ENCODE measurements at regions of chr19 and their contacts with region 1.

Region 1: GRCh38 chr19:36114763-36115452 is at the start of gene POLR2I:
- DNase-seq: peak; percentile 97 to 100 (median 99)
- ATAC-seq: peak; percentile 88 to 89
- H3K4me3 Mint-ChIP-seq: peak within 1 kb of the TSS; percentile 83 to 99 (median 94)
- H3K27ac Mint-ChIP-seq: peak within 1 kb of the TSS; percentile 93 to 99 (median 98)
- H3K4me1 Mint-ChIP-seq: peaks cover 20 to 59% (median 51%) of the 10 kb centered on the region in 4 donors
- H3K27me3 Mint-ChIP-seq: peaks cover 0 to 4% (median 0%) of the 10 kb centered on the region in 5 donors
- polyA plus RNA-seq, gene POLR2I: 124 to 168 (median 149) TPM

Region 2: GRCh38 chr19:36054119-36054732 is 60.7 kb before region 1 on chr19 and contains the start of gene THAP8:
- POLR2A ChIA-PET with region 1: interaction called, 22 read pairs
- DNase-seq: peak; percentile 97 to 100 (median 100)
- ATAC-seq: peak; percentile 83 to 85
- H3K4me3 Mint-ChIP-seq: peak within 1 kb of the TSS; percentile 95 to 100 (median 98)
- H3K27ac Mint-ChIP-seq: peak within 1 kb of the TSS; percentile 92 to 99 (median 98)
- H3K4me1 Mint-ChIP-seq: peaks cover 13 to 33% (median 28%) of the 10 kb centered on the region in 4 donors
- H3K27me3 Mint-ChIP-seq: no peaks in the 10 kb centered on the region
- polyA plus RNA-seq, gene THAP8: 2.4 to 7.2 (median 5.3) TPM

Region 3: DNA sequence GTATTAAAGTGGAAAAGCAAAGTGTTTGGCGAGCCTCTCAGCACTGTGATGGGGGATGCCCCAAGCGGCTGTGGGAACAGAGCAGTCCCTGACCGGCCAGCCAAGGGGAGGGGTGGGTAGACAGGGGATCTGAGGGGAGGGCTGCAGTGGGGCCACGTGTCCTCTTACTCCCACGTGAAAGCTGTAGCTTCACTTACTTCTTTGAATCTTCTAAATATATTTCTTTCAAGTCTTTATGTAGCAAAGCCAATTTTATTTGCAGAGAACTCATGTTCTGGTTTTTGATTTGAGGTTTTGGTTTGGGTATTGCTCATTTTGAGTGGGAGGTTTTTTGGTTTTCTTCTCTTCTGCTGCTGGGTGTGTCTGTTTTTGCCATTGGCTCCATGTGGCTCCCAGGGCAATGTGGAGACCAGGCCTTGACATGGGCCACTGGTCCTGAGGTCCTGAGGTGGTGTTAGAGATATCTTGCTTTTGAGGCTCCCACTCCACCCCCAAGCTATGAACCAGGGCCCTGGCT is 21.7 kb before region 1 on chr19:
- POLR2A ChIA-PET with region 1: no interaction called
- DNase-seq: no peak
- ATAC-seq: no peak
- H3K4me3 Mint-ChIP-seq: peak overlapping the region in 3 of 10 donors; percentile 8 to 49 (median 42)
- H3K27ac Mint-ChIP-seq: peak overlapping the region in 8 of 10 donors; percentile 34 to 87 (median 80)
- H3K4me1 Mint-ChIP-seq: peaks cover 3 to 19% (median 15%) of the 10 kb centered on the region in 4 donors
- H3K27me3 Mint-ChIP-seq: no peaks in the 10 kb centered on the region

Region 4: GRCh38 chr19:36128392-36128736 is 13.5 kb after region 1 on chr19:
- POLR2A ChIA-PET with region 1: interaction called, 42 read pairs
- DNase-seq: no peak
- ATAC-seq: peak in 1 of 2 donors; percentile 18
- H3K4me3 Mint-ChIP-seq: peak overlapping the region; percentile 83 to 93 (median 90)
- H3K27ac Mint-ChIP-seq: peak overlapping the region; percentile 60 to 95 (median 91)
- H3K4me1 Mint-ChIP-seq: peaks cover 2 to 41% (median 16%) of the 10 kb centered on the region in 4 donors
- H3K27me3 Mint-ChIP-seq: no peaks in the 10 kb centered on the region

Region 5: DNA sequence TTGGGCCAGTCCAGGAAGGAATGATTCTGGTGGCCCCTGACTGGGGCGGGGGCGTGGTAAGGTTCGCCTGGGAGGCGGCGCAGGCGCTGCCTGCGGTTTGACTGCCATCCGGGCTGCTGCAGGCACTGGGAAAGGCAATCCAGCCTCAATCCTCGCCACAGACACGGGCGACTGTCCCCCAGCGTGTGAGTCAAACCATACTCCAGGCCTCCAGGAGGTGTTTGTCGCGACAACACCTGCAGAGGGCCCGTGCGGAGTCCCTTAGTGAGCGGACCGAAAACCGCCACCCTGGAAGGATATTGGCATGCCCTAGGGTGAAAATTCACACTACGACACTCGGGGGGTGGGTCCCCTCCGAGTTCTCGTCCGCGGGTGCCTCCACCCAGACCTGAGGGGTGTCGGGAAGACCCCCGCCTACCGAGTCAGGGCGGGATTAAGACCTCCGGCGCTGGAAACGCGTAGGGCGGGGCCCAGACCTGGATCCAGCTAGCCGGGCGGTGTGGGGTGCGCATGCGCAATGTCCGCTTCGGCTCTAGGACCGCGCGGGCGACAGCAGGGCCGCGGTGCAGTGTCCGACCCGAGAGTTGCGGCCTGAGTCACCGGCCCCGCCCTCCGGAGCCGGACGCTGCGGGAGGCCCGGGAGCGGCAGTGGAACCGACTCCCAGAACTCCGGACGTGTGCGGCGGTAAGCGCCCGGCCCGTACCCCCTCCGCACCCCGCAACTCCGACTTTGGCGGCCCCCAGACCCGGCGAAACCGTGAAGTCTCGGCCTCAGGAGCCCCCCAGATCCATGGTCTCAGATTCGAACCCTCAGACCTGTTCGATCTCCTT is 24.8 kb after region 1 on chr19 and contains the start of gene CAPNS1:
- POLR2A ChIA-PET with region 1: interaction called, 18 read pairs
- DNase-seq: peak; percentile 86 to 95 (median 90)
- ATAC-seq: peak; percentile 67 to 70
- H3K4me3 Mint-ChIP-seq: peak within 1 kb of the TSS; percentile 92 to 96 (median 95)
- H3K27ac Mint-ChIP-seq: peak within 1 kb of the TSS; percentile 82 to 97 (median 95)
- H3K4me1 Mint-ChIP-seq: peaks cover 12 to 22% (median 19%) of the 10 kb centered on the region in 4 donors
- H3K27me3 Mint-ChIP-seq: no peaks in the 10 kb centered on the region
- polyA plus RNA-seq, gene CAPNS1: 93.4 to 137 (median 100.0) TPM

Measured in naive thymus-derived CD8-positive, alpha-beta T cell (primary cell).